Gastrocnemius medialis (tissue), 4 donors: ENCODE measurements at regions of chr2 and their contacts with region 1.

Region 1: DNA sequence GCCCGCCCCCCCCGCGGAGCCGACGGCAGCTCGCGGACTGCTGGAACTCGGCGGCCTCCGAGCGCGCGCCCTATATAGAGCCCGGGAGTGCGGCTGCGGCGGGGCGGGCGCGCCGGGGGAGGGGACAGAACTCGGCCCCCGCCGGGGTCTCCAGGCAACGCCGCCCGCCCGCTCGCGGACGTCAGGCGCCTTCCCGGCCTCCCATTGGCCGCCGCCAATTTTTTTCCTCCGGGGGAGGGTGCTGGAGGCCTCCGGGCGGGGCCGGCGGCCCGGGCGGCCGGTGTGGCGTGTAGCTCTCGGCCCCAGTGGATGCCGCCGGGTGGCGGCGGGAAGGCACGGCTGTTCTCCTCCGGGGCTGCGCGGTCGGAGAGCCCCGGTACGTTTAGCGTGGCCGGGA is at the start of gene ZFP36L2:
- DNase-seq: peak; percentile 94 to 95
- ATAC-seq: peak; percentile 59 to 61
- H3K4me3 ChIP-seq: peak within 1 kb of the TSS; percentile 76 to 99 (median 96)
- H3K27ac ChIP-seq: peak within 1 kb of the TSS; percentile 99 to 100 (median 100)
- H3K4me1 ChIP-seq: peaks cover 34 to 41% of the 10 kb centered on the region in 2 donors
- H3K27me3 ChIP-seq: no peaks in the 10 kb centered on the region
- CTCF ChIP-seq: no peak
- POLR2A ChIP-seq: peak; percentile 97 to 100
- total RNA-seq, gene ZFP36L2: 15.5 to 58.6 (median 44.8) TPM

Region 2: GRCh38 chr2:42828487-42829425 is 397.8 kb before region 1 on chr2:
- in situ Hi-C with region 1: loop called (anchors 10 to 25 kb)
- intact Hi-C with region 1: loop called (anchors 5 kb)
- DNase-seq: peak; percentile 43 to 62
- ATAC-seq: peak; percentile 64 to 78
- H3K4me3 ChIP-seq: no peak overlapping the region
- H3K27ac ChIP-seq: peak overlapping the region in 1 of 4 donors; percentile 63
- H3K4me1 ChIP-seq: peaks cover 11 to 17% of the 10 kb centered on the region in 2 donors
- H3K27me3 ChIP-seq: no peaks in the 10 kb centered on the region
- CTCF ChIP-seq: peak; percentile 75 to 91 (median 87)
- POLR2A ChIP-seq: no peak

Region 3: DNA sequence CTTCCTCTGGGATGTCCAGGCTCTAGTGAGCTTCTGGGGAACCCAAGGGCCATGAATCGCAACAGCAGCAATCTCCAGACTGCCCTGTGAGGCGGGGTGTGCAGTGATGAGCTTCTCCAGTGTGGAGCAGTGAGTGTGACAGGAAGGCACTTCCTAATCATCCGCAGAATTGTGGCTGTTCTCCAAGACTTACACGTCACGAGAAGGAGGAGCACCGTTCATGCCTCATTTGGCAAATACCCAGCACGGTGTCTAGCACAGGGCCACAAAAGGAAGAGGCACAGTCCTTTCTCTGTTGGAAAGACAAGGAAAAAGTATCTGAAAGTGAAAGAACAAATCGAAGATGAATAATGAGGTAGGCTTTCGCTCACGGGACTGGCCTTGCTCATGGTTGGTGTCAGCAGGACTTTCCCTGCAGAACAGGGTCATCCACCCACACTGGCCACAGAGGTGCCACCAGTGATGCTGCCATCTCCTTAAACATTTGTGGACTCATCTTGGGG is 309.1 kb before region 1 on chr2:
- in situ Hi-C with region 1: no loop called
- intact Hi-C with region 1: no loop called
- DNase-seq: peak in 1 of 2 donors; percentile 46
- ATAC-seq: peak; percentile 60 to 65
- H3K4me3 ChIP-seq: no peak overlapping the region
- H3K27ac ChIP-seq: peak overlapping the region in 1 of 4 donors; percentile 50
- H3K4me1 ChIP-seq: peaks cover under 1 to 8% of the 10 kb centered on the region in 2 donors
- H3K27me3 ChIP-seq: no peaks in the 10 kb centered on the region
- CTCF ChIP-seq: no peak
- POLR2A ChIP-seq: no peak

Region 4: GRCh38 chr2:42974721-42975717 is 251.5 kb before region 1 on chr2:
- in situ Hi-C with region 1: loop called in 3 of 4 experiments (anchors 5 to 10 kb)
- intact Hi-C with region 1: loop called (anchors 1 kb)
- DNase-seq: peak; percentile 63 to 65
- ATAC-seq: peak; percentile 81 to 82
- H3K4me3 ChIP-seq: peak overlapping the region; percentile 41 to 60 (median 48)
- H3K27ac ChIP-seq: peak overlapping the region in 3 of 4 donors; percentile 19 to 63 (median 54)
- H3K4me1 ChIP-seq: peaks cover 9 to 13% of the 10 kb centered on the region in 2 donors
- H3K27me3 ChIP-seq: no peaks in the 10 kb centered on the region
- CTCF ChIP-seq: peak; percentile 93 to 95 (median 94)
- POLR2A ChIP-seq: no peak

Region 5: DNA sequence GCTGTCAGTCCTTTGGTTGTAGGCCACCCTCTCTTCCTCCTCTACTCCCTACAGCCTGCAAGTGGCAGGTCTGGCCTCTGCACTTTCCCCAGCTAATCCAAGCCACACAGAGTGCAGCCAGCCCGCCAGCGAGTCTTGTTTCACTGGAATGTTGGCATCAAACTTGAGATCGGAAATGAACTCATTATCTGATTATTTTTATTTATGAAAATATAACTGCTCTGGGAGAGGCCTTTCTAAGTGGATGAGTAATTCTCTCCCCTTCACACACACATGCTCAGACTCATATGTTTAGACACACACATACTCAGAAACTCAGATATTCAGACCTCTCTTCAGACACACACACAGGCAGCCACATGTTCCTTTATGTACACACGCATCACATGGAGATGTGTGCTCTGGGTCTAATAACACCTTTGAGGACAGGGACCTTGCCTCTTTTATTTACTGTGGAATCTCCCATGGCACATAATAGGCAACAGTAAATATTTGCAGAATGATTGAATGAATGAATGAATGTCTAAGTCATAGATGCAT is 151.4 kb before region 1 on chr2:
- in situ Hi-C with region 1: no loop called
- intact Hi-C with region 1: loop called (anchors 2 kb)
- DNase-seq: peak; percentile 76 to 77
- ATAC-seq: peak; percentile 77 to 87
- H3K4me3 ChIP-seq: no peak overlapping the region
- H3K27ac ChIP-seq: peak overlapping the region; percentile 80 to 81 (median 80)
- H3K4me1 ChIP-seq: peaks cover 55 to 64% of the 10 kb centered on the region in 2 donors
- H3K27me3 ChIP-seq: no peaks in the 10 kb centered on the region
- CTCF ChIP-seq: peak in 2 of 5 experiments; percentile 20 to 28
- POLR2A ChIP-seq: no peak

Region 6: GRCh38 chr2:43131024-43131889 is 95.3 kb before region 1 on chr2:
- in situ Hi-C with region 1: loop called in 2 of 4 experiments (anchors 5 kb)
- intact Hi-C with region 1: loop called (anchors 1 kb)
- DNase-seq: peak; percentile 92 to 95
- ATAC-seq: peak; percentile 82 to 84
- H3K4me3 ChIP-seq: no peak overlapping the region
- H3K27ac ChIP-seq: peak overlapping the region; percentile 36 to 88 (median 80)
- H3K4me1 ChIP-seq: peaks cover 16 to 28% of the 10 kb centered on the region in 2 donors
- H3K27me3 ChIP-seq: no peaks in the 10 kb centered on the region
- CTCF ChIP-seq: peak; percentile 12 to 55 (median 47)
- POLR2A ChIP-seq: peak in 1 of 2 donors; percentile 27

Region 7: GRCh38 chr2:43178602-43179542 is 47.7 kb before region 1 on chr2:
- in situ Hi-C with region 1: loop called in 1 of 4 experiments (anchors 10 kb)
- intact Hi-C with region 1: loop called (anchors 2 kb)
- DNase-seq: peak; percentile 83 to 94
- ATAC-seq: peak; percentile 93 to 94
- H3K4me3 ChIP-seq: peak overlapping the region; percentile 23 to 43 (median 39)
- H3K27ac ChIP-seq: peak overlapping the region; percentile 91 to 98 (median 94)
- H3K4me1 ChIP-seq: peaks cover 19 to 25% of the 10 kb centered on the region in 2 donors
- H3K27me3 ChIP-seq: no peaks in the 10 kb centered on the region
- CTCF ChIP-seq: no peak
- POLR2A ChIP-seq: peak; percentile 49 to 52